ENCODE measurements at regions of chr17 and their contacts with region 1.

Region 1: DNA sequence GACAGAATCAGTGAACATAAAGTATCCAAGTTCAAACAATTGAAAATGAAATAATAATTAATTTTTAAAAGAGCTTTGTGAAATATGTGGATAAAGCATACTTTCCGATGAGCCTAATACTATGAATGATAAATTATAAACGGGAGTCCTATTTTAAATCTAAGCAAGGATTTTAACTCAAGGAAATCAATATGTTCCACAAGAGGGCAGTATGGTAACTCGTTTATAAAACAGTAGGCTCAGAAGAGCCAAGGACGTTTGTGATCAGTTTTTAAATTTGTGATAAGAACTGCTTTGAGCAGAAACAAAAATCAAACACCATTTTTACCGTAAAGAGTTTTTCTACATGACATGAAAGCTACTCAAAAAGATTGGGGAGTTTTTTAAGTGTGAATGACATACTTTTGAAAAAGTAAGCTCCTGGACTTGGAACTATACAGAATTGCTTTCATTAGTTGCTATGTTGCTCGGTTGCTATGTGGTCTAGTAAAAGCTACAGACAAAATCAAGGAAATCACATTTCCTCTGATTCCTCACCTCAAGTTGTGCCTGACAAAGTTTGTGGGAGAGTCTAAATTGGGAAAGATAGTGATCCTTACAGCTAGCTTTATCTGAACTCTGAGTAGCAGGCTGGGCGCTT is 11.8 kb upstream of the TEKT1 start:
- DNase-seq: no peak
- ATAC-seq: peak; percentile 25
- H3K4me3 Mint-ChIP-seq: no peak overlapping the region
- H3K27ac Mint-ChIP-seq: no peak overlapping the region
- H3K4me1 Mint-ChIP-seq: no peaks in the 10 kb centered on the region
- H3K27me3 Mint-ChIP-seq: peaks cover 44% of the 10 kb centered on the region
- CTCF ChIP-seq: peak; percentile 36

Region 2: DNA sequence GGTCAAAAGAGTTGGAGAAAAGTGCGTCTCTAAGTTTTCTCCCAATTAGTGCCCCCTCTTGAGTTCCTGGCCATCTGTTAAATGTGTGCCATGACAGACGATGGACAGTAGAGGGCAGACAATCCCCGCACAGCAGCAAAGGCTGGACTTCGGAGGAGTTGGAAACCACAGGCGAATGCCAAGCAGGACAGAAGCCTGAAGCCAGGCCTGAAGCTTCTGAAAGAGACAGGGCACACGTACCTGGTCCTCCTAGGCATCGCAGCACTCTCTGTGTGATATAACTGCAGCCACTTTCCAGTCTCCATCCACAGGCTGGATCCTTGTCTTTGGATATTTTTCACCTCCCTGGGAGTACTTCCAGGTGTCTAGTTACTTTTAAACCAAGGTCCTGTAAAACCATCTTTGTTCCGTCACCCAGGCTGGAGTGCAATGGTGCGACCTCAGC is 177.3 kb before region 1 on chr17:
- CTCF ChIA-PET with region 1: interaction called, 19 read pairs
- POLR2A ChIA-PET with region 1: no interaction called
- intact Hi-C with region 1: loop called (anchors 1 kb)
- DNase-seq: no peak
- ATAC-seq: peak; percentile 95
- H3K4me3 Mint-ChIP-seq: no peak overlapping the region
- H3K27ac Mint-ChIP-seq: no peak overlapping the region
- H3K4me1 Mint-ChIP-seq: peaks cover 34% of the 10 kb centered on the region
- H3K27me3 Mint-ChIP-seq: no peaks in the 10 kb centered on the region
- CTCF ChIP-seq: no peak

Region 3: GRCh38 chr17:6831661-6832263 is 11.6 kb before region 1 on chr17 and contains the start of gene TEKT1:
- CTCF ChIA-PET with region 1: interaction called, 17 read pairs
- POLR2A ChIA-PET with region 1: no interaction called
- intact Hi-C with region 1: loop called (anchors 1 kb)
- DNase-seq: peak; percentile 65
- ATAC-seq: peak; percentile 94
- H3K4me3 Mint-ChIP-seq: peak within 1 kb of the TSS; percentile 83
- H3K27ac Mint-ChIP-seq: no peak within 1 kb of the TSS
- H3K4me1 Mint-ChIP-seq: peaks cover 15% of the 10 kb centered on the region
- H3K27me3 Mint-ChIP-seq: peaks cover 58% of the 10 kb centered on the region
- CTCF ChIP-seq: no peak
- total RNA-seq, gene TEKT1: not detected in 2 replicates

Region 4: DNA sequence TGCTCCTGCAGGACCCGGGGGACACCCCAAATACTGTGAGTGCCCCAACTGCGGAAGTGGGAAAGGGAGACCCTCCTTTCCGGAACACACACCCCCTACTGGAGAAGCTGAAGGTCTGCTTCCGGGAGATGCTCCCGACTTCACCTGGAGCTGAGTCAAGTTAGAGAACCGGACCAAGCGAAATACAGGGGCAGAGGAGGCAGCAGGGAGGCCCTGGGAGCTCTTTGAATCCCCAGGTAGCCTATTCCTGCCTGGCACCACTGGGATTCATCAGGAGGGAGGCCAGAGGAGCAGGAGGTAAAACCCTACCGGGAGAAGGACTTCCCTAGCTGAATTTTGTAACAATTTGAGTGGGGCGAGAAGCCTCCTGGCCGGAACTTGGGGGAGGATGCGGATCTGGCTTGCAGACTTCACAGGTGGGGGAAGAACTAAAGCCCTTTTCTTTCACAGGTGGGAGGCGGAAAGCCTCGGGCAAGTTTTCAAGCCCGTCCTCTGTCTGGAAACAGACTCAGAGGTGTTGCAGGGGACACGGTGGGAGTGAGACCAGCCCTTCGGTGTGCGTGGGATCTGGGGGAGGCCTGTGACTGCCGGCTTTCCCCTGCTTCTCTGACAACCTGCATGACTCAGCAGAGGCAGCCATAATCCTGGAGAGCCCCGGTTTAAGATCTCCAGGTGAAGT is 10.5 kb after region 1 on chr17:
- CTCF ChIA-PET with region 1: interaction called, 10 read pairs
- POLR2A ChIA-PET with region 1: no interaction called
- intact Hi-C with region 1: no loop called
- DNase-seq: no peak
- ATAC-seq: no peak
- H3K4me3 Mint-ChIP-seq: peak overlapping the region; percentile 44
- H3K27ac Mint-ChIP-seq: no peak overlapping the region
- H3K4me1 Mint-ChIP-seq: peaks cover 15% of the 10 kb centered on the region
- H3K27me3 Mint-ChIP-seq: peaks cover 21% of the 10 kb centered on the region
- CTCF ChIP-seq: no peak

Region 5: DNA sequence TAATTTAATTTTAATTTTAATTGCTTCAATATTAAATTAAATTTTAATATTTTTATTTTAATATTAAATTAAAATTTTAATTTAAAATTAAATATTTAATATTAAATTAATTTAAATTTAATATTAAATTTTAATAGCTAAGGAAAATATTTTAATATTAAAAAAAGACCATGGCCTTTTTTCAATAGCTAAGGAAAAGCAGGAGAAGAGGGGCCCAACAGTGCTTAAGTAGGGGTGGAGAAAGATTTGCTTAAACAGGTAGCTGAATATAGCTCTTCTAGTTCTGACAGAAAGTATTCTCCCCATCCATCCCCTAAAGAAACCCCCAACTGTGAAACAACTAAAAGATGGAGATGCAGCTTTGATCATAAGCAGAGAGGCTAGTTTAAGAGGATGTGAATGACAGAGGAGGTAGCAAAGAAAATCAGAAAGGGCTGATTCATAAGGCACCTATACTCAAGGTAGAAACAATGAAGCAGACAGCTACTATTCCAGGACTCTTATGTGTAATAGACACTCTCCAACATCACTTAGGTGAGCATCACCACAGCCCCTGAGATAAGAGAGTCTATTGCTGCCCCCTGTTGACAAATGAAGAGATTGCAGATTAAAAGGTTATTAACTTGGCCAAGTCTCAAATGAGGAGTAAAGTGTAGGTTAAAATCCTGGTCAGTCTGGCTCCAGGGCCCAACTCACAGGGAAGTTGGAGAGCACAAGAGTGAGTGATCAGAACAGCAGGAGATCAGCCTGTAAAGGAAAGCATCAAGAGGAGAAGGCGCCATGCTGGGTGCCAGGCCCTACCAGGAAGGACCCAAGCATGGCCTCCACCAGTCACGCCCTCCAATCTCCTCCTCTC is 161.3 kb after region 1 on chr17:
- CTCF ChIA-PET with region 1: interaction called, 33 read pairs
- POLR2A ChIA-PET with region 1: no interaction called
- intact Hi-C with region 1: loop called (anchors 1 kb)
- DNase-seq: no peak
- ATAC-seq: peak; percentile 95
- H3K4me3 Mint-ChIP-seq: no peak overlapping the region
- H3K27ac Mint-ChIP-seq: peak overlapping the region; percentile 54
- H3K4me1 Mint-ChIP-seq: peaks cover 22% of the 10 kb centered on the region
- H3K27me3 Mint-ChIP-seq: no peaks in the 10 kb centered on the region
- CTCF ChIP-seq: peak; percentile 50

Region 6: DNA sequence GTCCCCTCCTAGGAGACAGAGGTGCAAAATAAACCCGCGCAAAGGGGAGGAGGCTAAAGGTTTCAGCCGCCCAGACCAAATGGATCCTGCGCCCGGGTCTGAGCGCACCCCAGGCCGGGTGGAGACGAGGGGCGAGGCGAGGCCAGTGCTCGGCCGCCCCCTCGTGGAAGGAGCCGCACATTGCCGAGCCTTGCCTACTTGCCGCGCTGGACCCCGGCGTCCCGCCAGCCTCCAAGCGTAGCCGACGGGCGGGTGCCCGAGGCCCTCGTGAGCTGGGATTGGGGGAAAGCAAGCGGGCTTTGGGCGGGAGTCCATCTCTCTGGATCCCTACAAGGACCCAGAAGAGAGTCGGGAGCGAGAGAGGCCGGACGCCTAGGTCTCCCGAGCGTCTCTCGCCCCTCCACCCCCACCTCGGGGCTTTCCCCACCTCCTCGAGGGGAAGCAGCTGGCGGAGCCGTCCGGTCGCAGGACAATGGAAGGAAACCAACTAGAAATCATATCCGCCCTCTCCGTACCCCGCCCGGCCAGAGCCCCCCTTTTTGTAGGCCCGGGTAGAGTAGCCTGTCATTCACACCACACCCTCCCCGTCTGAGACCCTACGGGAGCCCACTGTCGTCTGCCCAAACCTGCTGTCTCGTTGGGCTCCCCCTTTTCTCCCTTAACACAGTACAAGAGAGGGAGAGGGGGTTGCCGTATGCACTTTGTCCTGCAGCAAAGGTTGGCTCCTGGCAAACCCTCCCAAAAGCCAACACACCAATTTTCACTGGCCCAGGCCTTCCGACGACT is 178.8 kb after region 1 on chr17:
- CTCF ChIA-PET with region 1: interaction called, 16 read pairs
- POLR2A ChIA-PET with region 1: interaction called, 3 read pairs
- intact Hi-C with region 1: loop called (anchors 1 kb)
- DNase-seq: peak; percentile 87
- ATAC-seq: peak; percentile 77
- H3K4me3 Mint-ChIP-seq: peak overlapping the region; percentile 82
- H3K27ac Mint-ChIP-seq: peak overlapping the region; percentile 85
- H3K4me1 Mint-ChIP-seq: peaks cover 27% of the 10 kb centered on the region
- H3K27me3 Mint-ChIP-seq: no peaks in the 10 kb centered on the region
- CTCF ChIP-seq: peak; percentile 63

Measured in activated B cell treated with CpG ODN at 0.5 μM for 24 hours (primary cell).